Activated B cell treated with CpG ODN at 0.5 μM for 24 hours (primary cell): ENCODE measurements at regions of chr4 and their contacts with region 1.

Region 1: DNA sequence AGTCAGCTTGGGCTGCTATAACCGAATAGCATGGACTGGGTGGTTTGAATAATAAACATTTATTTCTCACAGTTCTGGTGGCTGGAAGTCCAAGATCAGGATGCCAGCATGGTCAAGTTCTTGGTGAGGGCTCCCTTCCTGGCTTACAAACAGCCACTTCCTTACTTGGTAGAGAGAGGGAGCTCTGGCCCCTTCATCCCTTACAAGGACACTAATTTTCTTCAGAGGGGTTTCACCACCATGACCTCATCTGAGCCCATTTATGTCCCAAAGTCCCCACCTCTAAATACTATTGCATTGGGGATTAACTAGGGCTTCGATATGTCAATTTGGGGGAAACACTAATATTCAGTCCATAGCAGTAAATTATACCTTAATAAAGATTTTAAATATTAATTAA is 61.8 kb downstream of the CLNK start:
- DNase-seq: no peak
- ATAC-seq: peak; percentile 49
- H3K4me3 Mint-ChIP-seq: no peak overlapping the region
- H3K27ac Mint-ChIP-seq: no peak overlapping the region
- H3K4me1 Mint-ChIP-seq: peaks cover 14% of the 10 kb centered on the region
- H3K27me3 Mint-ChIP-seq: no peaks in the 10 kb centered on the region
- CTCF ChIP-seq: no peak

Region 2: DNA sequence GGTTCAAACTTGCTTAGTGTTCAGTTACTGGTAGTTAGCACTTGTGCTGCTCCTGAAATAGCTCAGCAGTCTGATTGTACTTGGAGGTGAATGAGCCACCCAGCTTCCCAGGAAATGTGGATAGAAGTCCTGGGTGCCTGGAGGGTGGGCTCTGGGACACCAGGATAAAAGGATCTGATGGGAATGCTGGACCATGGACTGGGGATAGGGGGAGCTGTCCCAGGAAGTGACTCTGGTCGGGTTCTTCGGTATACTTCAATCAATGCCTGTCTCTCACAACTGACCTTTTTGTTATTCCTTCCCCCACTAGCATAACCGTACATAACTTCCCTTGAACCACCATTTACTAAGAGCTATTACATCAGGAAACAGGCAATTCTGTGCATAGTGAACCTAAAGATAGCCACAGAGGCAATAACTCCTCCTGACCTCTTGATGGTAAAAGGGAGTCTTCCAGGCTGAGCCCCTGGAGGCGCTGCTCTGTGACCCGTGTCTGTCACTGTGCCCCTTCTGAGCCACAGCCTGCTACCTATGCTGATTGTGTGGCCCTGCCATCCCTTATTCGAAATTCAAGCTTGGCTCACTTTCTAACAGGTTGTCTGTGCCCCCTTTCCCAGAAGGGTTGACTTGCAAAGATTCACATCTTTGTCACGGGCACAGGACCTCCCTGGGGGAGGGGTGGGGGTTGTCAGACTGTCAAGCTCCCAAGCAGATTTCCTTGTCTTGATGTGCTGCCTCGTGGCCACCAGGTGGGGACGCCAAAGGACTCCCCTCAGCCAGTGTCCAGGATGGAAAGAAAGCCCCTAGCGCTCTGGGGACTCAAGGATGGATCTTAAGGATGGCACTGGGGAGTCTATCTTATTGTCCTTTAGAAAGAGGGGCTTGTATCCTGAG is 481.6 kb before region 1 on chr4:
- CTCF ChIA-PET with region 1: no interaction called
- POLR2A ChIA-PET with region 1: no interaction called
- intact Hi-C with region 1: no loop called
- DNase-seq: no peak
- ATAC-seq: no peak
- H3K4me3 Mint-ChIP-seq: no peak overlapping the region
- H3K27ac Mint-ChIP-seq: no peak overlapping the region
- H3K4me1 Mint-ChIP-seq: peaks cover 11% of the 10 kb centered on the region
- H3K27me3 Mint-ChIP-seq: peaks cover 15% of the 10 kb centered on the region
- CTCF ChIP-seq: no peak

Region 3: GRCh38 chr4:10582059-10582686 is 40.6 kb before region 1 on chr4:
- CTCF ChIA-PET with region 1: no interaction called
- POLR2A ChIA-PET with region 1: no interaction called
- intact Hi-C with region 1: no loop called
- DNase-seq: no peak
- ATAC-seq: no peak
- H3K4me3 Mint-ChIP-seq: no peak overlapping the region
- H3K27ac Mint-ChIP-seq: no peak overlapping the region
- H3K4me1 Mint-ChIP-seq: peaks cover 25% of the 10 kb centered on the region
- H3K27me3 Mint-ChIP-seq: no peaks in the 10 kb centered on the region
- CTCF ChIP-seq: no peak

Region 4: DNA sequence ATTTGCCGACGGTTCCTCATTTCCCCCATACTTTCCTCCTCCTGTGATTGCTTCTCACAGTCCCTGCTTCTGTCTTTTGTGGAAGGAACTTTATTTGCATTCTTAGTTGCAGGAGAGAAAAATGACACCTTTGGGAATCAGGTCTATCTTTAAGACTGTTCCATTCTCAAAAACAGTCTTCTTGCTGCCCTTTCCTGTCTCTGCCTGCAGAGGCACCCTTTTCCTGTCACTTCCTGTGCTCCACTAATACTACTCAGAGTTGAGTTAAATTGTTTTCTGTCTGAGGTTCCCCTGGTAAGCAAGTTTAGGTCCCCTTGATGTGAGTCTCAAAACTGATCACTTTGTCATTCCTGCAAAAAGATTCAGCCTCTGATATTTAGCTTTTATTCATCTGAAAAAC is 270.7 kb after region 1 on chr4:
- CTCF ChIA-PET with region 1: no interaction called
- POLR2A ChIA-PET with region 1: no interaction called
- intact Hi-C with region 1: loop called (anchors 10 kb)
- DNase-seq: no peak
- ATAC-seq: no peak
- H3K4me3 Mint-ChIP-seq: no peak overlapping the region
- H3K27ac Mint-ChIP-seq: no peak overlapping the region
- H3K4me1 Mint-ChIP-seq: peaks cover 18% of the 10 kb centered on the region
- H3K27me3 Mint-ChIP-seq: no peaks in the 10 kb centered on the region
- CTCF ChIP-seq: no peak

Region 5: GRCh38 chr4:11720292-11720691 is 1097.6 kb after region 1 on chr4:
- CTCF ChIA-PET with region 1: no interaction called
- POLR2A ChIA-PET with region 1: no interaction called
- intact Hi-C with region 1: loop called (anchors 2 kb)
- DNase-seq: no peak
- ATAC-seq: no peak
- H3K4me3 Mint-ChIP-seq: no peak overlapping the region
- H3K27ac Mint-ChIP-seq: no peak overlapping the region
- H3K4me1 Mint-ChIP-seq: no peaks in the 10 kb centered on the region
- H3K27me3 Mint-ChIP-seq: peaks cover 2% of the 10 kb centered on the region
- CTCF ChIP-seq: no peak